H1 (cell line): ENCODE measurements at regions of chr11 and their contacts with region 1.

Region 1: GRCh38 chr11:120985718-120986569 is 38.0 kb upstream of the TBCEL start:
- DNase-seq: peak in 1 of 2 experiments; percentile 69
- H3K4me3 ChIP-seq: peak overlapping the region; percentile 25 to 55 (median 44)
- H3K27ac ChIP-seq: no peak overlapping the region
- H3K4me1 ChIP-seq: peaks cover 2 to 15% (median 11%) of the 10 kb centered on the region in 4 experiments; a peak in 5 of 7 replicates
- H3K27me3 ChIP-seq: peaks cover 0 to 13% (median 6%) of the 10 kb centered on the region in 4 experiments; a peak in 3 of 7 replicates
- CTCF ChIP-seq: peak; percentile 37 to 63 (median 57)
- EP300 ChIP-seq: no peak
- POLR2A ChIP-seq: no peak
- RAD21 ChIP-seq: peak; percentile 16 to 45; a peak in 3 of 4 replicates

Region 2: GRCh38 chr11:120996973-120997372 is 11.0 kb after region 1 on chr11:
- CTCF ChIA-PET with region 1: interaction called, 11 read pairs
- POLR2A ChIA-PET with region 1: interaction called, 5 read pairs
- DNase-seq: no peak
- H3K4me3 ChIP-seq: no peak overlapping the region
- H3K27ac ChIP-seq: no peak overlapping the region
- H3K4me1 ChIP-seq: peaks cover 0 to 5% (median 0%) of the 10 kb centered on the region in 4 experiments; a peak in 2 of 7 replicates
- H3K27me3 ChIP-seq: no peaks in the 10 kb centered on the region; a peak in 1 of 7 replicates
- CTCF ChIP-seq: no peak
- EP300 ChIP-seq: no peak
- POLR2A ChIP-seq: no peak
- RAD21 ChIP-seq: no peak